ENCODE measurements at regions of chr15 and their contacts with region 1.

Region 1: GRCh38 chr15:92881802-92882696 is 18.1 kb upstream of the CHD2 start:
- DNase-seq: peak; percentile 98
- CTCF ChIP-seq: no peak

Region 2: DNA sequence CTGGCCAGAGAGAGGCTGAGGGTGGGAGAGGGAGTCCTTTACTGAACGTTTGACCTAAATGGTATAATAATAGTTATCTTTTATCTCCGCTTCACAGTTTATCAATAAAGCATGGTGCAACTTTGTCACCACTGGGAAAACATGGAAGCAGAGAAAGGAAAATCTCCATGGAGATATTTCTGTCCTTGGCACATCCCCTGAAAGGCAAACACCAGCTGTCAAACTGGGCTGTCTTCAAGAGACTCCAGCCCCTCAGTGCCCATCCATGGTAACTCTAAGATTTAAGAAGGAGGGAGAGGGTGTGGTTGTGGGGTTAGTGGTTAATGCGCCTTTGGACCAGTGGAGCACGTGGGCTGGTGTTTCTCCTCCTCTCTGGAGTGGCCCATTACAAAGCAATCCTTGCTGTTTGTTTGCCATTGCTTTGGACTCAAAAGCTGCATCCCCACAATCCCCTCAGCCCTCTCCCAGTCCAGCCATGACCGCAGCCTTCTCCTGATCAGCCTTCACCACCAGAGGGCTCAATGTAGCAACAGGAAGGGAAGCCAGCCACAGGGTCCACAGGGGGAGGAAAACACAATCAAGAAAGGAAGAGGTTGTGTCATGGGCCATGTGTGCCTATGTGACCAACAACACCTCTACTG is 188.2 kb before region 1 on chr15:
- CTCF ChIA-PET with region 1: no interaction called
- POLR2A ChIA-PET with region 1: no interaction called
- DNase-seq: no peak
- CTCF ChIP-seq: peak; percentile 35

Region 3: GRCh38 chr15:92808978-92809879 is 72.8 kb before region 1 on chr15:
- CTCF ChIA-PET with region 1: interaction called, 23 read pairs
- POLR2A ChIA-PET with region 1: interaction called, 16 read pairs
- DNase-seq: peak; percentile 97
- CTCF ChIP-seq: peak; percentile 84

Region 4: GRCh38 chr15:92839696-92840095 is 42.4 kb before region 1 on chr15:
- CTCF ChIA-PET with region 1: interaction called, 6 read pairs
- POLR2A ChIA-PET with region 1: interaction called, 11 read pairs
- DNase-seq: peak; percentile 50
- CTCF ChIP-seq: no peak

Region 5: DNA sequence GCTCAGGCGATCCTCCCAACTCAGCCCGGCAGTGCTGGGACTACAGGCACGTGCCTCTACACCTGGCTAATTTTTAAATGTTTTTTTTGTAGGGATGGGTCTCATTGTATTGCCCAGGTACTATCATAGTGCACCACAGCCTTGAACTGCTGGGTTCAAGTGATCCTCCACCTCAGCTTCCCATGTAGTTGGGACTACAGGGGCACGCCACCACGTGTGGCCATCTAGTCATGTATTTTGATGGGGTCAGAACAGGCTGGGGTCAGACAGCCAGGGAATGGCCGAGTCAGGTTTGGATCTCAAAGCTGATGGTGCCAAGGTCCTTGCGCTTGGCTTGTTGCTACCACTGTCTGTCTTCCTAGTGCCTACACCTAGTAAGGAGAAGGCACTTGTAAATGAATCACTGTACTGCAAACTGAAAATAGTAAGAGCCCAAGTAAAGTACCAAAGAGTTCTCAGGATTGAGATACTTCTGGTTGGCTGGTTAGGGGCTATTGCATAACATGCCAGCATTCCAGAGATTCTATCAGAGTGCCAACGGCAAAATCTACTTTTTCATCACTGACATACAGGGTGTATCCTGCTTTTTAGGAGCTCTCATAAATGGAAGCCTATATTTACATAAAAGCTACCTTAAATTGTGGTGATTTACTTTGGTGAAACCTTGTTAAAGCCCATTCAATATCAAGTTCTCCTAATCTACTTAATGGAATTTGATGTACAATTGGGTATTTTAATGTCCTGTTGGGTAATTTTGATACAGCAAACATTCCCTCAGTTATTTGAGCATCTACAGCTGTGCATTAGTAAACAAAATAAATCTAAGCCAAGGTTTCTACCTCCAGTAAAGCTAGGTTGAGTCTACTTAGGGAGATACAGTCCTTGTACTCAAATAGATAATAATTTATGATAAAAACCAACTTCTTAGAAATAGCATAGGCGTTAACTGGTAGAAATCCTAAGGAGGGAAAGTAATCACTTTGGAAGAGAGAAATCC is 12.8 kb before region 1 on chr15:
- CTCF ChIA-PET with region 1: interaction called, 17 read pairs
- POLR2A ChIA-PET with region 1: no interaction called
- DNase-seq: no peak
- CTCF ChIP-seq: no peak

Region 6: DNA sequence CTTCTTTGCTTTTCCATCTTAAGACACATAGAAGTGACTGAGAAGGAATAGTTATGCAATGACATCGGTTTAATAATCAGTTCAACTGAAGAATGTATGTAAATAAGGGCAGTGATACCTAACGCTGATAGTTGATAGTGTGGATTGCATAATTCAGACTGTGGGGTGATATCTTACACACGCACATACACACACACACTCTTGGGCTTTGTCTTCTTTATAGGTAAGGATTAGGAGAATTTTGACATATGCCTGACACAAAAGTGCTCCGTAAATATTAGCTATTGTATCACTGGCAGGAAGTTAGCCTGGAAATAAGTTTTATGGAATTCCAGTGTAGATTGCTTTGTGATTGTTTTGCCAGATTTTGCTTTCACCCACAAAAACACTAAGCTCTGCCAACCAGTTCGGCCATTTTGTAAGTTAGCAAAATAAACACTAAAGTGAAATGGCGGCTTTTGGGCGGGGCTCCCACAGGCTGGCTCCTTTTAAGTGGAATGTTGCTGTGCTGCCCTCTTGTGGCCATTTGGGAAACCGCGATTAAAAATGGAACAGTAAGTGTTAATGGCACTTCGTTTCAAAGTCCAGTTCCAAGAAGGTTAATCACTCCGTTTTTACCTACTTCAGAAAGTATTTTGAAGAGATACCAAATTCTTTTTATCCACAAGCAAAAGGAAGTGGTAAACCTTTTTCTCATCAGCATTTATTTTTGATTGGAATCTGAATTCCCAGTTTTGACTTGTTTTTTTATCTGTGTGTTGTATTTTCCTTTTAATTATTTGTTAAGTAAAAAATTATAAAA is 35.8 kb after region 1 on chr15:
- CTCF ChIA-PET with region 1: interaction called, 6 read pairs
- POLR2A ChIA-PET with region 1: interaction called, 10 read pairs
- DNase-seq: peak; percentile 79
- CTCF ChIP-seq: peak; percentile 82